Right ventricle myocardium inferior (tissue), 1 donor: ENCODE measurements at regions of chrX and their contacts with region 1.

Region 1: GRCh38 chrX:3548765-3549391 is 164.6 kb downstream of the PRKX start:
- DNase-seq: no peak
- ATAC-seq: no peak

Region 2: DNA sequence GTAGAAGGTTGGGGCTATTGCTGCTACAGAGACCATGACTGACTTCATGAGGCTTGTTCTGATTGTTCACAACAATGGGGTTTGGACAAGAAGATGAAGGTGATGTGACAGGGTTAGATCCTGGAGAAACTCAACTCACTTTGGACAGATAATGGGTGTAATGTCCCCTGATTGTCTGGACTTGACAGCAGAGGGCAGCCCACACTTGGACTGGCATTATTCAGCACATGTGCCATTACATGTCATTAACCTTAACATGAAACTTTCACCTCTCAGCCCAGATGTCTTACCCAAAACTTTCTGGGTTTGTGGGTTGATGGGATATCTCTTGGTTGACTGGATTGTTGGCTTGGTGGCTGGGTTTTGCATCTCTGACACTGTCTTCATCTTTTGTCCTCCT is 303.9 kb before region 1 on chrX:
- intact Hi-C with region 1: loop called (anchors 5 kb)
- DNase-seq: no peak
- ATAC-seq: no peak